Mammary epithelial cell (primary cell): ENCODE measurements at regions of chr12 and their contacts with region 1.

Region 1: DNA sequence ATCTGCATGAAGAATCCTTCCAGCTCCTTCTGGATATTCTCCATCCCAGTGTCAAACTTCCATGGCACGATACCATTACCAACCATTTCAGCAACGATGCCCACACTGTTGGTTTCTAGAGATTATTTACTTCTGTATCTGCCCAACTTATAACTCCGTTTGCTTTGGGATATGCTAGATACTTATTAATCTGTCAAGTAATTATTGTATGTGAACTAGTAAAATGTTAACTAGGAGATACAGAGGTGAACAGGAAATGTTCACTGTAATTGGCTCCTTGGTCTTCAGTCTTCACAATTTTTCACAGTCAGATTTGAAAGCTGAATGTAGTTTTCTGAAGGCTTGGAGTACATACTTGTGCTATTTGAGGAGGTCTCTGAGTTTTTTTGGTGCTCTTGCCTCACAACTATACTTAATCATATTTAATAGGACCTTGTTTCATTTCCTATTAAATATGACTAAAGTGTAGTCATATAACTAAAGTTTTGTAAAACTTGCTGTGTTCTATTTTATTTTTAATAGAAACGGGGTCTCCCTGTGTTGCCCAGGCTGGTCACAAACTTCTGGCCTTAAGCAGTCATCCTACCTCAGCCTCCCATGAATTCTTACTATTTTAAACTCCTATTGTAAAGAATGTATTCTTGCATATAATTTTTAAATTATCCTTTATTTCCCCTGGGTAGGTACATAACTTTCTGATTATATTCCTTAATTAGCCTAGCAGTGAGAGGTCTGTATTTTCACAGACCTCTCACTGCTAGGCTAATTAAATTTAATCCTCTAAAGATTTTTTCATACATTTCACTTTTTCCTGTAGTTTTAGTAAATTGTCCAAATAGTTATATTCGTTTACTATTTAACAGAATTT is 79.7 kb downstream of the FGD4 start:
- DNase-seq: no peak
- H3K4me3 ChIP-seq: no peak overlapping the region
- H3K27ac ChIP-seq: no peak overlapping the region
- H3K4me1 ChIP-seq: no peaks in the 10 kb centered on the region
- H3K27me3 ChIP-seq: no peaks in the 10 kb centered on the region
- CTCF ChIP-seq: no peak

Region 2: GRCh38 chr12:32377344-32378055 is 101.6 kb before region 1 on chr12:
- CTCF ChIA-PET with region 1: no interaction called
- dilution Hi-C with region 1: loop called (anchors 10 kb)
- in situ Hi-C with region 1: no loop called
- intact Hi-C with region 1: no loop called
- DNase-seq: no peak
- H3K4me3 ChIP-seq: no peak overlapping the region
- H3K27ac ChIP-seq: no peak overlapping the region
- H3K4me1 ChIP-seq: no peaks in the 10 kb centered on the region
- H3K27me3 ChIP-seq: no peaks in the 10 kb centered on the region
- CTCF ChIP-seq: no peak

Region 3: DNA sequence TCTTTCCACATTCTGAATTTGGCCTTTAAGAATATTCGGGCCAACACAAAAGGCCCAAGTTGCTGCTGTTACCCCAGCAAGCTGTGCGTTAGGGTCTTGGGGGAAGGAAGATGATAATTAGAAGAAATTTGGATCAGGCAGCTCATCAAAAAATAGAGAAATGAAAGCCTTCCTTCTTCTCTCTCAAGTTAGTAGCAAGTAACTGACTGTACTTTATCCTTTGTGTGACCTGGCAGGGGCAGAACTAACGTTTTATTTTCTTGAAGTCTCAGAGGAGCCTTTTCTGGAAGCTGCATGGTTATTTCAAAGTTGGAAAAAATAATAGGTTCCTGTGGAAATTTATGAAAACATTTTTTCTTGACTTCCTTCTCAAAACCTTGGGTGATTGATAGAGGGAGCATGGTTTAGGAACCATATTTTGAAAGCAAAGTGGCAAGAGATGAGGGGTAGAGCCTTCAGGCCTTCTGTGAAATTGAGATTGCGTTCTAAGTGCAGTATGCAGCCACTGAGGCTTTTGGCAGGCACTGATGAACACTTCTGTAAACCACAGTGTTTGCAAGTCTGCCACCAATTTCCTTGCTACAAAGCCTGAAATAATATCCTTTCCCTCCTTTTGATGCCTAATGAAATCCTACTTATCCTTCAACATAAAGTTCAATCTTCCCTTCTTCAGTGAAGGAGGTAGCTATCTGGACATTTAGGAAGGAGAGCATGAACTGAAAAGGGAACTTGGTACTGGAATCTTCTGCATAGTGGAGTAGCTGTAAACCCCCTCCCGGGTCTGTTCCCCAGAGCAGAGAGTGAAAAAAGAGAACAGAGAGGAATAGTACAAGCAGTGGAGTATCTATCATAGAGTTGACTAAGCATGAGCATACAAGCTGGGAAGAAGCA is 43.5 kb after region 1 on chr12:
- CTCF ChIA-PET with region 1: no interaction called
- dilution Hi-C with region 1: no loop called
- in situ Hi-C with region 1: no loop called
- intact Hi-C with region 1: no loop called
- DNase-seq: no peak
- H3K4me3 ChIP-seq: no peak overlapping the region
- H3K27ac ChIP-seq: no peak overlapping the region
- H3K4me1 ChIP-seq: no peaks in the 10 kb centered on the region
- H3K27me3 ChIP-seq: no peaks in the 10 kb centered on the region
- CTCF ChIP-seq: no peak

Region 4: GRCh38 chr12:32533971-32534590 is 55.0 kb after region 1 on chr12:
- CTCF ChIA-PET with region 1: no interaction called
- dilution Hi-C with region 1: loop called (anchors 10 kb)
- in situ Hi-C with region 1: no loop called
- intact Hi-C with region 1: no loop called
- DNase-seq: peak; percentile 73
- H3K4me3 ChIP-seq: peak overlapping the region in 2 of 3 experiments; percentile 43 to 45
- H3K27ac ChIP-seq: peak overlapping the region; percentile 50
- H3K4me1 ChIP-seq: peaks cover 36% of the 10 kb centered on the region
- H3K27me3 ChIP-seq: no peaks in the 10 kb centered on the region
- CTCF ChIP-seq: no peak

Region 5: DNA sequence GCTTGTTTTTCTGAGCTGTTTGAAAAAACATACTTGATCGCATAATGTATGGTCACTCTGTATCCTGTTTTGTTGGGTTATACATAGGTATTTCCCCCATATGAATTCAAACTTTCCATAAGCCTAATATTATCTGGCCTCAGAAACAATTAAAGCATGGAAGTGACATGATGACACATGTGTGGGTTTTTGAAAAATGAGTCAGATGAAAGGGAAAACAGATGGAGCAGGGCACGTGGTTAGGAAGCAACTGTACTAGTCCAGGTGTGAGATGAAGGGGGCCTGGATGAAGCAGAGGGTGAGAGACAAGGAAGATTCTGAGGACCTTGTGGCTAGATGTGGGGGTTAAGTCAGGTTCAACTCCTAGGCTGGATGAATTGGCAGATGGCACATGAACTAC is 107.3 kb after region 1 on chr12:
- CTCF ChIA-PET with region 1: no interaction called
- dilution Hi-C with region 1: loop called (anchors 10 kb)
- in situ Hi-C with region 1: no loop called
- intact Hi-C with region 1: no loop called
- DNase-seq: peak; percentile 84
- H3K4me3 ChIP-seq: no peak overlapping the region
- H3K27ac ChIP-seq: no peak overlapping the region
- H3K4me1 ChIP-seq: peaks cover 20% of the 10 kb centered on the region
- H3K27me3 ChIP-seq: no peaks in the 10 kb centered on the region
- CTCF ChIP-seq: no peak